ENCODE measurements at regions of chr5 and their contacts with region 1.

Region 1: GRCh38 chr5:74576941-74577456 is 63.5 kb downstream of the ENC1 start:
- DNase-seq: peak; percentile 17
- H3K4me3 Mint-ChIP-seq: peak overlapping the region; percentile 56
- H3K27ac Mint-ChIP-seq: peak overlapping the region; percentile 24
- H3K4me1 Mint-ChIP-seq: peaks cover 41% of the 10 kb centered on the region
- H3K27me3 Mint-ChIP-seq: peaks cover 23% of the 10 kb centered on the region

Region 2: GRCh38 chr5:74182603-74183002 is 394.4 kb before region 1 on chr5:
- intact Hi-C with region 1: loop called (anchors 1 kb)
- DNase-seq: peak; percentile 51
- H3K4me3 Mint-ChIP-seq: no peak overlapping the region
- H3K27ac Mint-ChIP-seq: peak overlapping the region; percentile 14
- H3K4me1 Mint-ChIP-seq: peaks cover 22% of the 10 kb centered on the region
- H3K27me3 Mint-ChIP-seq: peaks cover 21% of the 10 kb centered on the region

Region 3: DNA sequence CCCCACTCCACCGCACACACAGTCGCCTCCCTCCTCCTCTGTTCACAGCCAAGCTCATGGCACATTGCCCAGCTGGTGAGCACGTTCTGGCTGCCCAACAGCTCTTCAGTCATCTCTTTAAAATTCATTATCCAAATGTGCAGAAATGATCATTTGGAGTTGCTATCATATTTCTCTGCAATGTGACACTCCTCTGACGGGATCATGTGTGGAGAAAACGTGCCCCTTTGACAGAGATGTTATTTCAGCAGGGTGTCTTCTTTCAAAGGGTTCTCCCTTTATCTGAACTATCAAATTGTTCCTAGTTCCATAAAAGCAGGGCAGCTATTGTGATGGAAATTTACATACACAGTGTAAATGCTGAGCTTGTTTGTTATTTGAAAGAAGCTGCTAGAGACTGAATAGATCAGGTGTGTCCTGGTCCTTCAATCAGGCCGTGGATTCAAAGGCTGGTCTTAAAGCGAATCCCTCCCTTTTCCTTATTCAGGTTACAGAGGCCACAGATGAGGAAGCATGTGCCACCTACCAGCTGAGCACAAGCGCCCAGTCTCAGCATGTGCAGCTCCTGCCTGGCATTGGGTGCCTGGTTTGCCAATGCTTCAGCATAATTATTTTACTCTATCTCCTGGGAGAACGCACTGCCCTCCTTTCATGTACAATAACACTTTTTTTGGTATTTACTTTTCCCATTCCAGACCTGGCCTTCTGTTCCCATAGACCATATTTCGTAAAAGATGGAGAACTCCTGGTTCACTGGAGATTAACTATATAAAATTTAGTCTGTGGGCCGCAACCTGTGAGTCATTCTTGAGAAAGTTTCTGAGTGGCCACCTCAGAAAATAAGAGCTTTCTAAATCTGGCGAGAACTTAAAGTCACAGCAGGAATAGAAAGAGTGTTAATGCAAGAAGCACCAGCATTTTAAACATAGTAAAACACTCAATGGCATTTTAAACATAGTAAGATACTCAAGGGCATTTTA is 370.1 kb before region 1 on chr5:
- intact Hi-C with region 1: no loop called
- DNase-seq: no peak
- H3K4me3 Mint-ChIP-seq: no peak overlapping the region
- H3K27ac Mint-ChIP-seq: no peak overlapping the region
- H3K4me1 Mint-ChIP-seq: peaks cover 2% of the 10 kb centered on the region
- H3K27me3 Mint-ChIP-seq: peaks cover 37% of the 10 kb centered on the region

Region 4: DNA sequence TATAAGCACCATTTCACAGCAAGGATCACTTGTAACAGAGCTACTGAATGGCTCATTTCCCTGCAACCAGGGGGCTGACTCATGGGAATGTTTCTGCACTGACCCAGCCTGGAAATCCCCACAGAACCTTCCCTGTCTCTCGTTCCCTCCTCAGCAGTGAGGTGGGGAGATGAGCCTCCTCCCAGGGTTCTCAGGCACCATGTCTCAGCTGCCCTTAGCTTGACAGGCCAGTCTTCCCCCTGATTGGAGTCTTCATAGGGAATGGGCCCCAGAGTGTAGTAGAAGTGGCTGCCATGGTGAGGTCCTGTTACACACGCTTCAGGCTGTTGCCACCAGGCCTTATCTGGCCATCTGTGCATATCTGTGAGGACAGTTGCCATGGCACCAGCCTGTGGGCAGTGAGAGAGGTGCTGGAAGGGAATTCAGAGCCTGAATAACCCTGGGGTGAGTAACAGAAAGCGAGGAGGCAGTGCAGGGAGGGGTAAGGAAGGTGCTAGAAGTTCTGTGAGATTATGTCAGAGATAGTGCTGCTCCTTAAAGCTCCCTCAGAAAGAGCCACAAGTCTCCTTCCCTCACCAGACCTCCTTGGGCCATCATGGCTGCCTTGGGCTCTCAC is 260.8 kb before region 1 on chr5:
- intact Hi-C with region 1: loop called (anchors 2 kb)
- DNase-seq: no peak
- H3K4me3 Mint-ChIP-seq: no peak overlapping the region
- H3K27ac Mint-ChIP-seq: no peak overlapping the region
- H3K4me1 Mint-ChIP-seq: peaks cover 6% of the 10 kb centered on the region
- H3K27me3 Mint-ChIP-seq: peaks cover 17% of the 10 kb centered on the region

Region 5: DNA sequence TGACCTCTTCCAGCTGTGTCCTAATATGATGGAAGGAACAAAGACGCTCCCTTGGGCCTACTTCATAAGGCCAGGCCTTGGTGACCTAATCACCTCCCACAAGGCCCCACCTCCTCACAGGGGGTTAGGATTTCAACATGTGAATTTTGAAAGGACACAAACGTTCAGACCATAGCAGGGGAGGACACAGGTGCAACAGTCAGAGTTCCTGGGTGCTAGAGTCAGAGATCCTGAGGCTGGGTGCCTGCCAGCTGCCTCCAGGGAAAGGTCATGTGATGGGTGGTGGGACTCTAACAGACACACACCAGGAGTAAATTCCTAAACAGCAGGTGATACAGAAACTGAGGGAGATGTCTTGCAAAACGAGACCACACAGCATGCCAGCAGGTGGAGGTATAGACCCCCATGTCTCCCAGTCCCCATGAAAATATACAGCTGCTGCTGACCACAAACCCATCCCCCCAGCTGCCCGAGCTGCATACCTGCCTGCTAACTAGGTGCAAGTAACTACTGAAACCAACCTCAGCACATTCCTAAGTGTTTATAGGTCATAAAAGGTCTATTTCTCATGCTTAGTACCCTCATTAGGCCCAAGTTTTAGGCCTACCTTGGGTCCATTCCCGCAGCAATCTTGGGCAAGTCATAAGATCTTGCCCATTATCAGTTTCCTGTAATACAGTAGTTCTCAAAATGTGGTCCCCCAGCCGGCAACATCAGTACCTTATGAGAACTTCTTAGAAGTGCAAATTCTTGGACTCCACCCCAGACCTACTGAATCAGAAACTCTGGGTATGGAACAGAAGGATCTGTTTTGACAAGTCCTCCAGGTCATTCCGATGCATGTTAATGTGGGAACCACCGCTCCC is 181.8 kb before region 1 on chr5:
- intact Hi-C with region 1: loop called (anchors 5 kb)
- DNase-seq: no peak
- H3K4me3 Mint-ChIP-seq: no peak overlapping the region
- H3K27ac Mint-ChIP-seq: no peak overlapping the region
- H3K4me1 Mint-ChIP-seq: peaks cover 11% of the 10 kb centered on the region
- H3K27me3 Mint-ChIP-seq: peaks cover 8% of the 10 kb centered on the region

Region 6: DNA sequence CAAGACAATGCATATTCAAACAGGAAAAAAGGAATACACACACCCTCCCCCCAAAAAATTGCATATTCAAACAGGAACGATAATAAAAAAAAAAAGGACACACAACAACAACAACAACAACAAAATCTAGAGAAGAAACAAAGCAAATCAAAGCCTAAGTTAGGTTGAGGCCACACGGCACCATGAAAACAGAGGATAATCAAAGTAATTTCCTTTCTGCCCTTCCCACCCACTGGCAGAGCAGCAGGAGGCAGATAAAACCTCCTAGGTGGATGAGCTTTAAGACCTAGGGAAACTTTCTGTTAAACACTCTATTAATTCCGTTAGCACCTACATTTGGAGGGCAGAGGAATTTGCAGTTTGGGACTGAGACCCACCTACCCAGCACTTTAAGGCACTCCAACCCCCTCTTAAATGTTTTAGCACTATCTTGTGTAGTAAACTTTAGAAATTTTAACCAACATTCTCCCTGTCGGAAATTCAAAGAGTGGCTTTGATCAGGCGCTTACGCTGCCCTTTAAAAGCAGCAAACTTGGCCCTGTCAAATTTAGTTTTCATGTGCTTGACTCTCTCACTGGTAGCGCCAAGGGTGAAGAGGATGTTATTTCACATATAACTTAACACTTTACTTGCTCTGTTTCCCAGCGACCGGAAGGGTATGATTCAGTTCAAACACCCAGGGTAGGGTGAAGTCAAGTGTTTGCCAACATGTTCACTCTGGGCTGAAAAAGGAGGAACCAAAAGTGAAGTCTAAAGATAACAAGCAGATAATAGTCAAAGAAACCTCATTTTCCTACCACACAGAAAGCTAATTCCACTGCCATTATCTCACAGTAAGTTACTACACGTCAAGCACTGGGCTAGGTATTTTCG is 54.3 kb after region 1 on chr5:
- intact Hi-C with region 1: loop called (anchors 1 kb)
- DNase-seq: peak; percentile 16
- H3K4me3 Mint-ChIP-seq: no peak overlapping the region
- H3K27ac Mint-ChIP-seq: peak overlapping the region; percentile 82
- H3K4me1 Mint-ChIP-seq: peaks cover 15% of the 10 kb centered on the region
- H3K27me3 Mint-ChIP-seq: peaks cover 25% of the 10 kb centered on the region

Region 7: GRCh38 chr5:74934949-74935751 is 358.2 kb after region 1 on chr5:
- intact Hi-C with region 1: loop called (anchors 5 kb)
- DNase-seq: peak; percentile 11
- H3K4me3 Mint-ChIP-seq: peak overlapping the region; percentile 33
- H3K27ac Mint-ChIP-seq: peak overlapping the region; percentile 48
- H3K4me1 Mint-ChIP-seq: peaks cover 31% of the 10 kb centered on the region
- H3K27me3 Mint-ChIP-seq: peaks cover 25% of the 10 kb centered on the region

Region 8: DNA sequence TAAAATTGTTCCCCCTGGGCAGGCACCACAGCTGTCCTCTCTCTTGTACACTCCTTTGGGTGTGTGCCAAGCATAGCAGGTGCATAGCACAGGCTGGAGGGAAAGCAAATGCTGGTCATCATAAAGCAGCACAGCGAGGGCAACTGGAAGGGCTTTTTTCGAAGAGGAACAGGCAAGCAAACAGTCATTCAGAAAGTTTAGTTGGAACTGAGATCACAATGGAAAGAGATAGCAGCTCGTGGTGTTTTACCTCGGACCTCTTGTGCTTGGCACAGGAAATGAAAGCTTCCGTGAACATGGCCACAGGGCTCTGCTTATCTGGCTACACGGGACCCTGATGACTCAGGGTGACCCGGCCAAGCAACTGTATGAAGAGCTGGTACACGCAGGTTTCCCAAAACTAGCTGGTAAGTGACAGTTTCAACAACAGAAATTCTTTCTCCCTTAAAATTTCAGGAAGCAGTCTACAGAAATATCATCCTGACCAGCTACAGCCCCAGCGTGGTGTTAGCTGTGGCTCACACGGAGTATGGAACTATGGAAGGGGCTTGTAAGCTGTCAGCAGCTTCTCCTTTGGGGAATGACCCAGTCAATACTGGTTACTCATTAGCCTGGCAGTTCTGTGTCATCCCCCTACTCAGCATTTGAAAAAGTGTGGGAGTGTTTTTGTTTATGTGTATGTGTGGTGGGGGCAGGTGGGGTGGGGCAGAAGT is 1092.1 kb after region 1 on chr5:
- intact Hi-C with region 1: loop called (anchors 5 kb)
- DNase-seq: peak; percentile 57
- H3K4me3 Mint-ChIP-seq: peak overlapping the region; percentile 65
- H3K27ac Mint-ChIP-seq: peak overlapping the region; percentile 92
- H3K4me1 Mint-ChIP-seq: peaks cover 54% of the 10 kb centered on the region
- H3K27me3 Mint-ChIP-seq: no peaks in the 10 kb centered on the region